ENCODE measurements at regions of chr6 and their contacts with region 1.

Region 1: GRCh38 chr6:132279592-132280139 is 121.6 kb downstream of the MOXD1 start:
- DNase-seq: peak; percentile 56 to 76 (median 70)
- H3K4me3 ChIP-seq: peak overlapping the region; percentile 43 to 77
- H3K4me3 Mint-ChIP-seq: peak overlapping the region; percentile 21 to 94 (median 82)
- H3K27ac ChIP-seq: no peak overlapping the region
- H3K27ac Mint-ChIP-seq: peak overlapping the region in 1 of 7 donors; percentile 36
- H3K4me1 ChIP-seq: no peaks in the 10 kb centered on the region
- H3K4me1 Mint-ChIP-seq: peaks cover 0 to 4% (median 0%) of the 10 kb centered on the region in 4 donors
- H3K27me3 ChIP-seq: no peaks in the 10 kb centered on the region
- H3K27me3 Mint-ChIP-seq: peaks cover 10 to 19% of the 10 kb centered on the region in 2 donors

Region 2: DNA sequence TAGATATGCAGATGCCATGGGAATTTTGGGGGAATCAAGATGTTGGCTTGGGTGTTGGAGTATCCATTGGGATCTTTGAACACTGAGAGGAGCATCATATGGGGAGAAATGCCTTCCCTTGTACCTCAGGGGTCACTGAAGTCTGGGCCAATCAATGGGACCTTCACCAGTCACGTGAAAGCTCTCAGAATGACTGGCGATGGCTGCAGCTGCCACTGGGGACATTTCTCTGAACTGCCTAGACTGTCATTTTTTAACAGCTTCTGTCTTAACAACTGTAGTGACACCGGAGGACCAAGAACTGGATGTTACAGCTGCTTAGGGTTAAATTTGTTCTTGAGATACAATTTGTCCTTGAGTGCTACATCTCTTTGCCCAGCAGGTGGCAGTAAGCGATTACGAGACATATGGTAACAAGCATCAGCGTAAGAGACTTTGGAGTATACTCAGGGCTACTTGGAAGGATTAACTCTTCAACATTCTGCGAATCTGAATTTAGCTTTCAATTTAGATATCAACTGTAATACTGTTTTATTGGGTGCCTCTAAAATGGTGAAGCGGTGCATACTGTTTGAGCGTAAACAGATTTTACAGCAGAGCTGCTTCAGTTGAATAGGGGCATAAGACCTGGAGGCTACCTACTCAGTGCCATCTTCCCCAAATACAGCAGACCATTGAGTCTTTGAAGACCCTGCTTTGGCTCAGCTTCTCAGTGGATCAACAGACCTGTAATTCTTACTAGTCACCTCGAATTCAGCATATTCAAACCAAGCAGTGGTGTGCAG is 364.5 kb before region 1 on chr6:
- CTCF ChIA-PET with region 1: interaction called, 9 read pairs
- POLR2A ChIA-PET with region 1: no interaction called
- intact Hi-C with region 1: loop called (anchors 5 kb)
- DNase-seq: peak; percentile 37 to 57 (median 44)
- H3K4me3 ChIP-seq: no peak overlapping the region
- H3K4me3 Mint-ChIP-seq: peak overlapping the region in 1 of 8 donors; percentile 13
- H3K27ac ChIP-seq: no peak overlapping the region
- H3K27ac Mint-ChIP-seq: no peak overlapping the region
- H3K4me1 ChIP-seq: peaks cover 7% of the 10 kb centered on the region
- H3K4me1 Mint-ChIP-seq: peaks cover 13 to 35% (median 17%) of the 10 kb centered on the region in 4 donors
- H3K27me3 ChIP-seq: no peaks in the 10 kb centered on the region
- H3K27me3 Mint-ChIP-seq: peaks cover 37 to 50% of the 10 kb centered on the region in 2 donors

Region 3: GRCh38 chr6:132020138-132020581 is 259.5 kb before region 1 on chr6:
- CTCF ChIA-PET with region 1: no interaction called
- POLR2A ChIA-PET with region 1: no interaction called
- intact Hi-C with region 1: no loop called
- DNase-seq: no peak
- H3K4me3 ChIP-seq: no peak overlapping the region
- H3K4me3 Mint-ChIP-seq: no peak overlapping the region
- H3K27ac ChIP-seq: no peak overlapping the region
- H3K27ac Mint-ChIP-seq: no peak overlapping the region
- H3K4me1 ChIP-seq: no peaks in the 10 kb centered on the region
- H3K4me1 Mint-ChIP-seq: no peaks in the 10 kb centered on the region
- H3K27me3 ChIP-seq: no peaks in the 10 kb centered on the region
- H3K27me3 Mint-ChIP-seq: peaks cover 0 to 3% of the 10 kb centered on the region in 2 donors

Region 4: DNA sequence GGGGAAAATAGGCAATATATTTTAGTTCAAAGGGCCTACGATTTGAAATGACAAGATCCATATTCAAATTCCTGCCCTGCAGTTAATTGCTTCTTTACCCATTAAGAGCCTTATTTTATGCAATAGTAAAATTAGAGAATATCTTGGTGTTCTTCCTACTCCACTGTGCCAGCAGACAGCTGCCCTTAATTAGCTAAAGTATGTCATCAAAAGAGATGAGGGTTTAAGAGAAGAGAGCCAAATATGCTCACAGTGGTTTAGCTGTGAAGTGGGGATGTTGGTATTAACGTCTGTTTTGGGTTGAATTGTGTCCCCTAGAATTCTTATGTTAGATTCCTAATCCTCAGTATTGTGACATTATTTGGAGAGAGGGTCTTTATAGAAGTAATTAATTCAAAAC is 26.5 kb before region 1 on chr6:
- CTCF ChIA-PET with region 1: interaction called, 16 read pairs
- POLR2A ChIA-PET with region 1: no interaction called
- intact Hi-C with region 1: no loop called
- DNase-seq: no peak
- H3K4me3 ChIP-seq: no peak overlapping the region
- H3K4me3 Mint-ChIP-seq: no peak overlapping the region
- H3K27ac ChIP-seq: no peak overlapping the region
- H3K27ac Mint-ChIP-seq: no peak overlapping the region
- H3K4me1 ChIP-seq: no peaks in the 10 kb centered on the region
- H3K4me1 Mint-ChIP-seq: no peaks in the 10 kb centered on the region
- H3K27me3 ChIP-seq: no peaks in the 10 kb centered on the region
- H3K27me3 Mint-ChIP-seq: peaks cover 8 to 19% of the 10 kb centered on the region in 2 donors

Region 5: DNA sequence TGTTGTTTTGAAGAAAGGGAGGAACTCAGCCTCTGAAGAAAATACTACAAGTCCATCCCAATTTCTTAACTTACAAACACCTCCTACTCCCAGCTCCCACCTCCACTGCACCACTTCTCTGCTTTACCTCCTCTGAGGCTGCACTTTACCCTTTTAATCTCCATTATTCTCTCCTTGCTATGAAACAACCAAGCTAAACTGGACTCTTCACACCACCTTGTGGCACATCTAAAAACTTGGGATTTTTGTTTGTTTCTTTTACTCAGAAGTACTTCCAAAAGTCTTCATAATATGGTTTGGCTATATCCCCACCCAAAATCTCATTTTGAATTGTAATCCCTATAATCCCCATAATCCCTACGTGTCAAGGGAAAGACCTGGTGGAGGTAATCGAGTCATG is 20.6 kb before region 1 on chr6:
- CTCF ChIA-PET with region 1: interaction called, 18 read pairs
- POLR2A ChIA-PET with region 1: no interaction called
- intact Hi-C with region 1: no loop called
- DNase-seq: no peak
- H3K4me3 ChIP-seq: no peak overlapping the region
- H3K4me3 Mint-ChIP-seq: no peak overlapping the region
- H3K27ac ChIP-seq: no peak overlapping the region
- H3K27ac Mint-ChIP-seq: no peak overlapping the region
- H3K4me1 ChIP-seq: no peaks in the 10 kb centered on the region
- H3K4me1 Mint-ChIP-seq: no peaks in the 10 kb centered on the region
- H3K27me3 ChIP-seq: no peaks in the 10 kb centered on the region
- H3K27me3 Mint-ChIP-seq: peaks cover 13 to 14% of the 10 kb centered on the region in 2 donors

Region 6: GRCh38 chr6:132265451-132266097 is 14.1 kb before region 1 on chr6:
- CTCF ChIA-PET with region 1: interaction called, 98 read pairs
- POLR2A ChIA-PET with region 1: no interaction called
- intact Hi-C with region 1: no loop called
- DNase-seq: no peak
- H3K4me3 ChIP-seq: no peak overlapping the region
- H3K4me3 Mint-ChIP-seq: no peak overlapping the region
- H3K27ac ChIP-seq: no peak overlapping the region
- H3K27ac Mint-ChIP-seq: no peak overlapping the region
- H3K4me1 ChIP-seq: no peaks in the 10 kb centered on the region
- H3K4me1 Mint-ChIP-seq: no peaks in the 10 kb centered on the region
- H3K27me3 ChIP-seq: no peaks in the 10 kb centered on the region
- H3K27me3 Mint-ChIP-seq: peaks cover 5 to 10% of the 10 kb centered on the region in 2 donors

Region 7: DNA sequence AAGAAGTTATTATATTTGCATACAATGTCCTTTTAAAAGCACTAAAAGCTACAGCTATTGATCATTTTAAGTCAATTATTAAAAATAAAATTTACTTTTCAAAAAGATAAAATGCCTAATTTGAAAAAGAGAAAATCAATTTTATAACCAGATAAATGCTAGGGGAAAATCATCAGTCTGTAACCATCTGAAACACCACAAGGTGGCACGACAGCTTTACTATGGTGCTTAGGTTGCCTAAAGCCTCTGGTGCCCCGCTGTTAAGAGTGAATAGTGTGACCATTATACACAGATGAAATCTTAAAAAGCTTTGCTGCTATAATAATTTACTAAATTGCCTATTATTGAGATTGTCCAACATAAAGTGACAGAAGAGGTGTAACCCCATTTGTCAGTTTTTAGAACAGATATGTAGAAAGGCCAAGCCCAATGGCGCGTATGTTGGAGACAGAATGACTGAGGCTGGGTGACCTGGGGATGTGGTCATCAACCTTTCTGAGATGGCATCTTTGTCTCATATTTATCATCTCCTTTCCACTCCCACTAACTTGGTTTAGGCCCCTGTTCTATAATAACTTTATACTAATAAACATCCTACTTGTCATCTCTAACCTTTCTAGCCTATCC is 20.8 kb after region 1 on chr6:
- CTCF ChIA-PET with region 1: interaction called, 141 read pairs
- POLR2A ChIA-PET with region 1: no interaction called
- intact Hi-C with region 1: loop called (anchors 1 kb)
- DNase-seq: peak in 1 of 5 donors; percentile 5
- H3K4me3 ChIP-seq: no peak overlapping the region
- H3K4me3 Mint-ChIP-seq: no peak overlapping the region
- H3K27ac ChIP-seq: no peak overlapping the region
- H3K27ac Mint-ChIP-seq: no peak overlapping the region
- H3K4me1 ChIP-seq: no peaks in the 10 kb centered on the region
- H3K4me1 Mint-ChIP-seq: no peaks in the 10 kb centered on the region
- H3K27me3 ChIP-seq: no peaks in the 10 kb centered on the region
- H3K27me3 Mint-ChIP-seq: peaks cover 17 to 19% of the 10 kb centered on the region in 2 donors

Region 8: DNA sequence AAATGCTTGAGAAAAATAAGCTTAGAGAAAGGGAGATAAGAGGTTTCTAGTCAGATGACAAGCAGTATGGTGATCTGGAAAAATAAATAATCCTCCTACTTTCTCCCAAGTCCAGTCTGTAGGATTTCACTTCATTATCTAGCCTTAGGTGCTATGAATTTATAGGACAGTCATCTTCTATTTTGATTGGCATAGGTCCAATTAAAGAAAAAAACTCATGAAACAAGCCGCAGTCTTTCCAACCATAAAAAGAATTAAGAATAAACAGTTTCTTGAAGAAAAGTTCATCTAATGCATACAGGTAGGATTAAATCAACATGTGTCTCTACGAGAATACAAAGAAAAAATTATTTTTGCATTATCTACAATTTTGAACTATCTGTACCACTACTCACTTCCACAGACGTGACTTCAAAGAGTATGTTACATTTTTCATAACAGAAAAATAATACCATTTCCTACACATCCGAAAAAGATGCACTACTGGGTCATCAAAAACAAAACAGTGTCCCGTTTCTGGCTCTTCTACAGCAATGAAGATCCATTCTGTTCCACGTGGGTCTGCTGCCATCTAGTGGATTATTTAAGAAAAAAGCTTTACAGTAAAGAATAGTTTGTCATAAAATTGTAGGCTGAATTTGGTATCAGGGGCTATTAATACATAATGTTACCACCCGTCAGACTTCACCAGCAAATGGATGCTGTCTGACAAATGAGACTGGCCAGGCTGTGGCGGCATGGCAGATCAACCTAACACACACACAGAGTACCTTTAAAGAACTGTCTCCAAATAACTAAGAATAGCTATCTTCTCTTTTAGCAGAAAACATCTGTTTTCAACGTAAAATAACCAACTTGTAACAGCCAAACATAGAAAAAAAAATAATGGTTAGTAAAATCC is 204.4 kb after region 1 on chr6:
- CTCF ChIA-PET with region 1: interaction called, 201 read pairs
- POLR2A ChIA-PET with region 1: no interaction called
- intact Hi-C with region 1: loop called (anchors 1 kb)
- DNase-seq: peak; percentile 56 to 67 (median 61)
- H3K4me3 ChIP-seq: no peak overlapping the region
- H3K4me3 Mint-ChIP-seq: no peak overlapping the region
- H3K27ac ChIP-seq: no peak overlapping the region
- H3K27ac Mint-ChIP-seq: peak overlapping the region in 2 of 7 donors; percentile 17 to 30
- H3K4me1 ChIP-seq: peaks cover 6% of the 10 kb centered on the region
- H3K4me1 Mint-ChIP-seq: peaks cover 14 to 21% (median 20%) of the 10 kb centered on the region in 4 donors
- H3K27me3 ChIP-seq: no peaks in the 10 kb centered on the region
- H3K27me3 Mint-ChIP-seq: no peaks in the 10 kb centered on the region

Measured in CD4-positive, alpha-beta memory T cell (primary cell).